GM12878 (cell line): ENCODE measurements at regions of chr19 and their contacts with region 1.

Region 1: DNA sequence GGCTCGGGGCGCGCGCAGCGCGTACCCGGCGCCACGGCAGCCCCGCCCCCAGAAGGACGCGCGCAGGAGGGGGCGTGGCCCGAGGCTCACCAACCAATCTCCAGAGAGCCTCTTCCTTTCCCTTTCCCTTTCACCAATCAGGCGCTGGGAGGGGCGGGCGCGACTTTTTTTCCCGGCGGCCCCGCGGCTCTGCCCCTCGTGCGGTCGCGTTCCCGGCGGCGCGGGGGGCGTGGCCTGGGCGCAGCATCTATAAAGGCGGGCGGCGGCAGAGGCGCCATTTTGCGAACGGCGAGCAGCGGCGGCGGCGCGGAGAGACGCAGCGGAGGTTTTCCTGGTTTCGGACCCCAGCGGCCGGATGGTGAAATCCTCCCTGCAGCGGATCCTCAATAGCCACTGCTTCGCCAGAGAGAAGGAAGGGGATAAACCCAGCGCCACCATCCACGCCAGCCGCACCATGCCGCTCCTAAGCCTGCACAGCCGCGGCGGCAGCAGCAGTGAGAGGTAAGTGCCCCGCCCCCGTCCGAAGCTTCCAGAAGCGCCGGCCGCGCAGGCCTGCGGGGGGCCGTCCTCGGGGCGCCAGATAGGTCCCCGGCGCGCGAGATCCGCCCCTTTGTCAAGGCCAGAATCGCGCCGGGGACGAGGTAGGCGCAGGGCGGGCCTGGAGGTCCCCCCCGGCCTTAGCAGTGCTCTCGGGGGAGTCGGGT is 12.6 kb downstream of the PEAK3 start:
- DNase-seq: peak; percentile 66
- ATAC-seq: peak; percentile 61
- H3K4me3 ChIP-seq: peak overlapping the region; percentile 95
- H3K27ac ChIP-seq: peak overlapping the region; percentile 89
- H3K4me1 ChIP-seq: peaks cover 20% of the 10 kb centered on the region
- H3K27me3 ChIP-seq: no peaks in the 10 kb centered on the region
- CTCF ChIP-seq: peak; percentile 5 to 9 (median 9); a peak in 1 of 6 replicates
- EP300 ChIP-seq: no peak
- POLR2A ChIP-seq: peak; percentile 100
- RAD21 ChIP-seq: no peak

Region 2: GRCh38 chr19:2168619-2169424 is 100.6 kb before region 1 on chr19:
- CTCF ChIA-PET with region 1: interaction called, 8 read pairs
- POLR2A ChIA-PET with region 1: interaction called, 5 read pairs
- RAD21 ChIA-PET with region 1: interaction called, 10 read pairs
- SMC1A ChIA-PET with region 1: interaction called, 4 read pairs
- in situ Hi-C with region 1: loop called (anchors 5 kb)
- intact Hi-C with region 1: loop called (anchors 5 kb)
- DNase-seq: peak; percentile 92
- ATAC-seq: peak; percentile 70
- H3K4me3 ChIP-seq: peak overlapping the region; percentile 92; the same call in 1 of the 2 replicates
- H3K27ac ChIP-seq: peak overlapping the region; percentile 74
- H3K4me1 ChIP-seq: peaks cover 49% of the 10 kb centered on the region
- H3K27me3 ChIP-seq: no peaks in the 10 kb centered on the region
- CTCF ChIP-seq: 0 out of 6 replicates have a peak, but pooled peaks of 1 of the 3 experiments have one; percentile 14
- EP300 ChIP-seq: peak; percentile 52 to 75; a peak in 2 of 4 replicates
- POLR2A ChIP-seq: peak; percentile 59; the same call in 1 of the 2 replicates
- RAD21 ChIP-seq: no peak

Region 3: GRCh38 chr19:2255982-2256685 is 13.3 kb before region 1 on chr19 and contains the start of gene JSRP1:
- CTCF ChIA-PET with region 1: interaction called, 19 read pairs
- POLR2A ChIA-PET with region 1: interaction called, 16 read pairs
- RAD21 ChIA-PET with region 1: interaction called, 4 read pairs
- SMC1A ChIA-PET with region 1: interaction called, 3 read pairs
- in situ Hi-C with region 1: no loop called
- intact Hi-C with region 1: no loop called
- DNase-seq: no peak
- ATAC-seq: no peak
- H3K4me3 ChIP-seq: no peak within 1 kb of the TSS
- H3K27ac ChIP-seq: no peak within 1 kb of the TSS
- H3K4me1 ChIP-seq: peaks cover 19% of the 10 kb centered on the region
- H3K27me3 ChIP-seq: peaks cover 14 to 19% of the 10 kb centered on the region in 2 experiments; a peak in 3 of 4 replicates
- CTCF ChIP-seq: no peak
- EP300 ChIP-seq: no peak
- POLR2A ChIP-seq: no peak
- RAD21 ChIP-seq: no peak
- polyA plus RNA-seq, gene JSRP1: not detected

Region 4: DNA sequence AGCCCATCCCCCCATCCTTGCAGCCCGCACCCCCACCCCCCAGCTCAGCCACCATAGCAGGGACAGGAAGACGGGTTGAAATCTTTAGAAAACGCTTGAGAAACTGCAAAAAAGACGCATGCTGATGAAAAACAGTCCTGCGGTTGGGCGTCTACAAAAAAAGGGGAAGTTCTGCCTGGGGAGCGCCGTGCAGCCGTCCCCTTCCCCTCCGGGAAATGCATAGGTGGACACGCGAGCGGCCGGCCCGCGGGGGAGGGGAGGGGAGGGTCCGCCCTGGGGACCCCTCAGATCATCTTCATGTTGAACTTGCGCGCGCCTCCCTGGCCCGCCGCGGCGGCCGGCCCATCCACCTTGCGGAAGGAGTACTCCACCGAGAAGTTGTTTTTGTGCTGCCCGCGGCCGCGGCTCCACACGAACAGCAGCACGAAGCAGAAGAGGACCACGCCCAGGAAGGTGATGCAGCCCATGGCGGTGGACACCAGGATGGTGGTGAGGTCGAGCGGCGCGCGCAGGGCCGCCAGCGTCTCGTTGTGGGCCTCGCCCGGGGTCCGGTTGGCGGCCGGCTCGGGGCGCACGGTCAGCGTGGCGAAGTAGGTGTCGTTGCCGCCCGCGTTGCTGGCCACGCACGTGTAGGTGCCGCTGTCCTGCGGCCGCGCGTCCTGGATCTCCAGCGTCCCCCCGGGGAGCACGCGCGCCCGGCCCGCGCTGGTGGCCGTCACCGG is 20.5 kb after region 1 on chr19:
- CTCF ChIA-PET with region 1: interaction called, 13 read pairs
- POLR2A ChIA-PET with region 1: interaction called, 8 read pairs
- RAD21 ChIA-PET with region 1: interaction called, 5 read pairs
- SMC1A ChIA-PET with region 1: interaction called, 3 read pairs
- in situ Hi-C with region 1: no loop called
- intact Hi-C with region 1: no loop called
- DNase-seq: peak; percentile 48
- ATAC-seq: peak; percentile 72
- H3K4me3 ChIP-seq: peak overlapping the region; percentile 65
- H3K27ac ChIP-seq: peak overlapping the region; percentile 74
- H3K4me1 ChIP-seq: peaks cover 30% of the 10 kb centered on the region
- H3K27me3 ChIP-seq: no peaks in the 10 kb centered on the region
- CTCF ChIP-seq: no peak
- EP300 ChIP-seq: peak; percentile 53 to 55; a peak in 2 of 4 replicates
- POLR2A ChIP-seq: no peak; the same call in 1 of the 2 replicates
- RAD21 ChIP-seq: no peak

Region 5: GRCh38 chr19:2627319-2627829 is 358.0 kb after region 1 on chr19:
- CTCF ChIA-PET with region 1: no interaction called
- POLR2A ChIA-PET with region 1: no interaction called
- RAD21 ChIA-PET with region 1: interaction called, 3 read pairs
- SMC1A ChIA-PET with region 1: no interaction called
- in situ Hi-C with region 1: no loop called
- intact Hi-C with region 1: loop called (anchors 5 kb)
- DNase-seq: no peak
- ATAC-seq: peak; percentile 52
- H3K4me3 ChIP-seq: no peak overlapping the region
- H3K27ac ChIP-seq: peak overlapping the region; percentile 45
- H3K4me1 ChIP-seq: peaks cover 55% of the 10 kb centered on the region
- H3K27me3 ChIP-seq: no peaks in the 10 kb centered on the region
- CTCF ChIP-seq: no peak
- EP300 ChIP-seq: no peak
- POLR2A ChIP-seq: peak; percentile 54; the same call in 1 of the 2 replicates
- RAD21 ChIP-seq: no peak

Region 6: DNA sequence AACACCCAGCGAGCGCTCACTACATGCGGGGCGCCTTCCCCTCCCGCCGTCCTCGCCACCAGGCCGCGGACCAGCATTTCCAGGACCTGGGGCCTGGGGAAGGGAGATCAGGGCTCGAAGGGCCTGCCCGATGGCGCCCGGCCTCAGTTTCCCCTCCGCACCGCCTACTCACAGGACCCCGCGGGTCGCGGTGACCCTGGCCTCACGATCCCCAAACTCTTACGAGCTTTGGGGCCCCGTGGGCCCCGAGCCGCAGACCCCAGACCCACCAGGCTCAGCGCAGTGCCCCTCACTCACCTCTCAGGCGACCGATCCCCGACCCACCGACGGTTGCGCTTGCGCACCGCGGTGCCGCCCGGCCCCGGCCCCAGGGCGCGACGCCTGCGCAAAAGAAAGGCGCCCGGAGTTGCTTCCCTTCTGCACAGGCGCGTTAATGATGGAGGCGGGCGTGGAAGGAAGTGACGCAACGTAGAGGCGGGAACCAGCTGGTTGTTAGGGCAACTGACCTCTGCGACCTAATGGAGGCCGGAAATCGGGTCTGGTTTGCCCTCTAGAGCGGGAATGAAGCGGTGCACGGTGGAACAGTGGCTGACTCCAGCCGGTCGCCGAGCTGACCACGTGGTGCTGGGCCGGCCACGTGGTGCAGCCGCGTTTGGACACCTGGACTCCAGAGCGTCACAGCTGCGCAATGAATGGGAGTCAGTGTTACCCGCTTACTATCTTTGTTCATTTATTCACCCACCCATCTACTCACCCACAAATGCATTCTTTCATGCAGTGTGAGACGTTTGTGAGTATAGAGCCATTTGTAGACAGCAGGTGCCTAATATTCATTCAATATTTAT is 513.8 kb after region 1 on chr19 and contains the start of gene SGTA:
- CTCF ChIA-PET with region 1: no interaction called
- POLR2A ChIA-PET with region 1: no interaction called
- RAD21 ChIA-PET with region 1: no interaction called
- SMC1A ChIA-PET with region 1: no interaction called
- in situ Hi-C with region 1: no loop called
- intact Hi-C with region 1: loop called (anchors 10 kb)
- DNase-seq: peak; percentile 98
- ATAC-seq: peak; percentile 86
- H3K4me3 ChIP-seq: peak within 1 kb of the TSS; percentile 99
- H3K27ac ChIP-seq: peak within 1 kb of the TSS; percentile 85
- H3K4me1 ChIP-seq: peaks cover 19% of the 10 kb centered on the region
- H3K27me3 ChIP-seq: no peaks in the 10 kb centered on the region
- CTCF ChIP-seq: peak; percentile 42 to 67 (median 50); a peak in 5 of 6 replicates
- EP300 ChIP-seq: peak; percentile 33 to 50; a peak in 1 of 4 replicates
- POLR2A ChIP-seq: peak; percentile 88
- RAD21 ChIP-seq: no peak
- polyA plus RNA-seq, gene SGTA: 2.0 to 3.1 TPM